ENCODE measurements at regions of chr5 and their contacts with region 1.

Region 1: DNA sequence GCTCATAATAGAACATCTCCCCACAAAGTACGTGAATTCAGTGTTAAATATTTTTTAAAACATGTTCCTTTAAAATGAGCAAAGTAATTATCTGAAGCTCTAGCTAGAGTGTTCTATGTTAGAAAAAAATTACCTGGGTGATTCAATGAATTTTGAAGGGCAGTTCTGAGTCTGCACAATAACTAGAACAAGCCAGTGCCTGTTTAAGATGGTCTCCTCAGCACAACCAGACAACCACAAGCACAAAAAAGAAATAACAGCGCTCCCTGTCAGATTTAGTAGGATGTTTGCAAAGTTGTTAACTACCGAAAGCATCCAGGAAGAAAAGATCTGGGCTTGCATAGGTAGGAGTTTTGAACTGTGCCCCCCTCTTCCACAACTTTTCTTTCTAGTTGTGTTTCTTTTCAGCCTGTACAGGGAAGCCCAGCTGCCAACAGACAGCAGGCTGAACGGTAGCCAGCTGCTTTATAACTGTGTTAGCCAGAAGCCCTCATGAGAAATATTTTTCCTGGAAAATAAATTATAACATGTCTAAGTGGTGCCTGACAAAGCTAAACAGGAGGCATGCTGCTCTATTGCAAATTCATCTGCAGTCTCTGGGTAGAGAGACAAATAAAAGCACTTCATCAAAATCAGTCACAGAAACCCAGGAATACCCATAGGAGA is 1026.9 kb downstream of the MAT2B start:
- DNase-seq: no peak
- CTCF ChIP-seq: no peak

Region 2: DNA sequence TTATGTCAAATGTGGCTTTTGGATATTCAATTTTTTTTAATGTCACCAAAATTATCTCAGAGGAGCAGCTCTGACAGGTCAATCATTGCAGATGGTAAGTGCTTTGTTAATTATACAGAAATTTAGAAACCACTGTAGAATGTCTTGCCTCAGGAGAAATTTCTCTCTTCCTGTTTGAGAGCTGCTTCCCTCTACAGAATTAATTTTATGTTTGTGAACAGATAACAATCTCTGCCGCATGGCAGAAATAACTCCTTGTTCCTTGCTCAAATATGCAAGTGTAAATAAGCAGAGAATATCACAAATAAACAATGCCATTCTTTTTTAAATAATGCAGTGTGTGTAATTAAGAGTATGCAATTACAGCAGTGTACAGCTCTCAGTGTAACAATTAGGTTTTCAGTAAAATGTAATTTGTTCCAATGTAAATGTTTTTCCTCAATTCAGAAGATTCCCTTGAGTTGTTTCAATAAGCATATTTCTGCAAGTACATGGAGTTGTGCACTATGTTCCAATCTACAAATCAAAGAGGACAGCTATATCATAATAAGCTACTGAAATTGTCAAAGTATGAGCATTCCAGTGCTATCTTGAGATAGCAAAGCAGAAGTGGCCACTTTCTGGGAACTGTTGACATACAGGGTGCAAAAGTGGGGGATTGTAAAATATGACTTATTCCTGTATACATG is 14.2 kb before region 1 on chr5:
- CTCF ChIA-PET with region 1: interaction called, 12 read pairs
- POLR2A ChIA-PET with region 1: no interaction called
- DNase-seq: no peak
- CTCF ChIP-seq: no peak

Measured in GM10248 (cell line).